ENCODE measurements at regions of chr1 and their contacts with region 1.

Region 1: DNA sequence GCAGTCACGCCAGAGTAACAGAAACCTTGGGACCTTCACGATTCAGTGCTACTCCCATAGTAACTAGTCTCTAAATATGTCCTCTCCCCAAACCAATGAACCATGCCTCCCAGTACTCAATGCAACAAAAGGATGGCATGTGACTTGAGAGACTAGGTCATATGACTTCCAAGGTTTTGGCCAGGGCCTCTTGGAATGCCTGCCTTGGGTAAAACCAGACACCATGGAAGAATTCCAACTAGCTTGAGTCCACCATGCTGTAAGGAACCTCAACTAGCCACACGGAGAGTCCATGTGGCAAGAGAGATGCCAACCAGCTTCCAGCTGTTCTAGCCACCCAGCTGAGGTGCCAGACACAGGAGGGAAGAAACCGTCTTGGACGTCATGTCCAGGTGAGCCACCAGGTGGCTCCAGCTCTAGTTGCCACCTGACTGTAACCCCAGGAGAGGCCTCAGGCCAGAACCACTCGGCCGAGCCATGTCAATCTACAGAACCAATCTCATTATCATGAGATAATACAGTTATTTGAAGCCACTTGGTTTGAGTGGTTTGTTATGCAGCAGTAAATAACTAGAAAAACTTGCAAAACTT is 115.0 kb downstream of the SYF2 start:
- DNase-seq: peak; percentile 66
- ATAC-seq: 0 out of 2 replicates have a peak, but pooled peaks have one; percentile 55
- H3K4me3 ChIP-seq: no peak overlapping the region
- H3K27ac ChIP-seq: no peak overlapping the region
- H3K4me1 ChIP-seq: no peaks in the 10 kb centered on the region
- H3K27me3 ChIP-seq: no peaks in the 10 kb centered on the region
- CTCF ChIP-seq: peak; percentile 68

Region 2: DNA sequence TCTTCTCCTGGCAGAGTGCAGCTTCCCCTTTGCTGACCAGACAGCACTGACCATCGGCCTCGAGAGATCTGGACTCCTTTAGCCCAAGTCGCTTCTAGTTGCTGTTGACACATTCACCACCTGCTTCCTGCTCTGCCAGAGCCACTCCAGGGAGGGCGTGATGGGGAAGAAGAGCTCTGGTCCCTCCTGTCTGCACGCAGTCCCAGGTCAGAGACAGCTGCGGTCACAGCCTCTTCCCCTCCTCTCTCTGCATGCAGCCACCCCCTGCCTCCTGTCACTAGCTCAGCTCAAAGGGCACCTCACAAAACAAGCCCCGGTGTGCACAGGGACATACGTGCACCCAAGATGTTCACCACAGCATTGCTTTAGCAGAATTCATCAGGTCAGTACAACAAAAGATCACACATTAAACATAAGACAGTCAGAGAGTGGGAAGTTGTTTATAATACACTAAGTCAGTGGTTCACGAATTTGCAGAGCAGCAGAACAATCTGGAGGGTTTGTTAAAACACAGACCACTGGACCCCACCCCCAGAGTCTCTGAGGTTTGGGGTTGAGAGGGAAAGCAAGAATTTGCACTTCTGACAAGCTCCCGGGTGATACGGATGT is 17.9 kb before region 1 on chr1:
- CTCF ChIA-PET with region 1: no interaction called
- POLR2A ChIA-PET with region 1: no interaction called
- intact Hi-C with region 1: no loop called
- DNase-seq: no peak
- ATAC-seq: no peak
- H3K4me3 ChIP-seq: no peak overlapping the region
- H3K27ac ChIP-seq: no peak overlapping the region
- H3K4me1 ChIP-seq: peaks cover 8% of the 10 kb centered on the region
- H3K27me3 ChIP-seq: no peaks in the 10 kb centered on the region
- CTCF ChIP-seq: no peak

Region 3: DNA sequence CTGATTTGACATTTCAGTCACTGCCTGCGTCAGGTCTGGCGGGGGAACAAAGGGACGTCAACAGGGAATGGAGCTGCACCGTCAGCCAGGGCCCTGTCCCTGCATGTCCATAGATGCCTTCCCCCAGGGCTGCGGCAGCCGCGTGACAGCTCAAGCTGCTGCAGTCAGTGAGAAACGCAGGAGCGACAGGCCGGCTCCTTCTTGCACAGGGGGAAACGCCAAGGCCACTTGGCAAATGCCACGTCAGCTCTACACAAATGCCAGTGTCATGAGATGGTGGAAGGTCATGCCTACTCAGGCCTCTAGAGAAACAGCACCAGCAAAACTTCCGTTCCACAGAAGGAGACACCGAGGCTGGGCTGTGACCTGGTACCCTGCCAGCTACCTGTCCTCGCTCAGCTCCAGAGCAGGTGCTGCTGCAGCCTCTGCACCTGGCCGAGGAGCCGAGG is 77.3 kb after region 1 on chr1:
- CTCF ChIA-PET with region 1: no interaction called
- POLR2A ChIA-PET with region 1: no interaction called
- intact Hi-C with region 1: no loop called
- DNase-seq: no peak
- ATAC-seq: no peak
- H3K4me3 ChIP-seq: no peak overlapping the region
- H3K27ac ChIP-seq: no peak overlapping the region
- H3K4me1 ChIP-seq: 0 out of 2 replicates have a peak, but pooled peaks cover 3% of the 10 kb centered on the region
- H3K27me3 ChIP-seq: peaks cover 5% of the 10 kb centered on the region; the same call in 1 of the 2 replicates
- CTCF ChIP-seq: no peak

Region 4: GRCh38 chr1:25204797-25205480 is 87.6 kb after region 1 on chr1:
- CTCF ChIA-PET with region 1: no interaction called
- POLR2A ChIA-PET with region 1: no interaction called
- intact Hi-C with region 1: loop called (anchors 2 kb)
- DNase-seq: peak; percentile 65
- ATAC-seq: no peak
- H3K4me3 ChIP-seq: no peak overlapping the region
- H3K27ac ChIP-seq: no peak overlapping the region
- H3K4me1 ChIP-seq: no peaks in the 10 kb centered on the region
- H3K27me3 ChIP-seq: 0 out of 2 replicates have a peak, but pooled peaks cover 2% of the 10 kb centered on the region
- CTCF ChIP-seq: peak; percentile 78